ENCODE measurements at regions of chr1 and their contacts with region 1.

Region 1: GRCh38 chr1:109984456-109985275 is at the start of gene AHCYL1:
- DNase-seq: peak; percentile 100
- ATAC-seq: peak; percentile 97
- H3K4me3 ChIP-seq: peak within 1 kb of the TSS; percentile 86
- H3K27ac ChIP-seq: peak within 1 kb of the TSS; percentile 91
- H3K4me1 ChIP-seq: peaks cover 26 to 46% of the 10 kb centered on the region in 2 experiments
- H3K27me3 ChIP-seq: no peaks in the 10 kb centered on the region
- CTCF ChIP-seq: peak; percentile 96 to 99 (median 99)
- EP300 ChIP-seq: no peak; the same call in 1 of the 2 replicates
- POLR2A ChIP-seq: peak; percentile 95
- RAD21 ChIP-seq: peak; percentile 100
- polyA plus RNA-seq, gene AHCYL1: 27.3 to 32.9 TPM

Region 2: DNA sequence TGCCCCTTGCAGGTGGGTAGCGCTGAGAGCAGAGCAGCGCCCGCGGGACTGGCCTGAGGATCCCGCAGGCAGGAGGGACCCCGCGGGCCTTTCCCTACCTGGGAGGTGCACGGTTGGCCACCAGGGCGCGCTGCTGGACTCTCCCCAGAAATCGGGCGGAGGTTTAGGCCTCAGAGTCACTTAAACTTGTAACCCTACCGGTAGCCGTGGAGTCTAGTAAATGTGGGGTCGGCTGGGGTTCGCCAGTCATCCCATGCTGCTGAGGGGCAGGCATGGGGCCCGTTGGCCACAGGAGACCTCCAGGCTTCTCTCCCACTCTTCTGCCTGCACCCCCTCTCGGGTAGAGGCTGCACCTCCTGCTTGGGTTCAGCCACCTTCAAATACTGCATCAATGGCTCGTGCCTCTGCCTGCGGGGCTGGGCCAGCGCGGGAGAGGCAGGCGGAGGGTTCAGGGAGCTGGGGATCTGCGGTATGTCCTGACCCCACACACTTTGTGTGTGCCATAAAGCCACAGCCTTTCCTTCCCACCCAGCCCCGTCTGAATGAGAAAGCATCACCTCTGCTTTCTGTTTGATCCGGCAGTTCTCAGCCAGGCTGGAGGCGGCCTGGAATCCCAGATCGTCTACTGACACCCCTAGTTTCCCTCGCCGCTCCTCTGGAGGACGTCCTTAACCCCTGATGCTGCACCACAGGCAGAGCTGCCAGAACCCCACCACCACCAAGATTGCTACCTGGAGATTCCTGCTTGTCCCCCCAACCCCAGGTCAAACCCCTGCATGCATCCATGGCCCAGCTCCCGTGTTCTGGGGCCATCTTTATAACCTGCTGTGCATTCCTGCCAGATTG is 341.1 kb before region 1 on chr1:
- CTCF ChIA-PET with region 1: interaction called, 15 read pairs
- POLR2A ChIA-PET with region 1: interaction called, 5 read pairs
- in situ Hi-C with region 1: loop called (anchors 5 kb)
- intact Hi-C with region 1: loop called (anchors 2 kb)
- DNase-seq: peak; percentile 84 to 91 (median 86)
- ATAC-seq: peak; percentile 97
- H3K4me3 ChIP-seq: no peak overlapping the region
- H3K27ac ChIP-seq: no peak overlapping the region
- H3K4me1 ChIP-seq: peaks cover 26 to 46% of the 10 kb centered on the region in 2 experiments
- H3K27me3 ChIP-seq: no peaks in the 10 kb centered on the region; a peak in 1 of 5 replicates
- CTCF ChIP-seq: peak; percentile 96 to 97 (median 97)
- EP300 ChIP-seq: no peak
- POLR2A ChIP-seq: no peak
- RAD21 ChIP-seq: peak; percentile 91 to 96

Region 3: DNA sequence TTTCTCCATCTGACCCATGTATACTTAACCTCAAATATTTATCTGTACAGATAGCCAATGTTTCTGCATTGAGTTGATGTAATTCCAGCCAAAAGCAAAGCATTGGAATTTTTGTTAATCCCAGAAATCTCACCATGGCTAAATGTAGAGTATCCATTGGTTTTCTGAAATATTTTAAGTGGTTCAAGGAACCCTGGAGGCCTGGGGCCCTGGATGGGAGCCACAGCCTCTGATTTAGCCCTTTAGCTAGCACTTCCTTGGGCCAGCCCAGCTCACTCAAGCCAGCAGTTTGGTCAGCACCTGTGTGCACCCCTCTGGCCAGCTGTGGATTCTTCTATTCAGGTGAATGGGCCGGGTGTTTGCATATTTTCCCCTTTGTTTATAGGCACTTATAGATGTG is 202.2 kb before region 1 on chr1:
- CTCF ChIA-PET with region 1: interaction called, 202 read pairs
- POLR2A ChIA-PET with region 1: interaction called, 99 read pairs
- in situ Hi-C with region 1: loop called (anchors 5 kb)
- intact Hi-C with region 1: loop called (anchors 1 kb)
- DNase-seq: no peak
- ATAC-seq: no peak
- H3K4me3 ChIP-seq: no peak overlapping the region
- H3K27ac ChIP-seq: no peak overlapping the region
- H3K4me1 ChIP-seq: peaks cover 6 to 8% of the 10 kb centered on the region in 2 experiments; a peak in 4 of 5 replicates
- H3K27me3 ChIP-seq: no peaks in the 10 kb centered on the region
- CTCF ChIP-seq: no peak
- EP300 ChIP-seq: no peak
- POLR2A ChIP-seq: no peak
- RAD21 ChIP-seq: no peak

Region 4: GRCh38 chr1:109821221-109821669 is 163.4 kb before region 1 on chr1:
- CTCF ChIA-PET with region 1: no interaction called
- POLR2A ChIA-PET with region 1: interaction called, 18 read pairs
- in situ Hi-C with region 1: no loop called
- intact Hi-C with region 1: no loop called
- DNase-seq: peak in 3 of 4 experiments; percentile 39 to 40 (median 40)
- ATAC-seq: no peak
- H3K4me3 ChIP-seq: no peak overlapping the region
- H3K27ac ChIP-seq: peak overlapping the region; percentile 80; the same call in 2 of the 3 replicates
- H3K4me1 ChIP-seq: peaks cover 60 to 71% of the 10 kb centered on the region in 2 experiments
- H3K27me3 ChIP-seq: no peaks in the 10 kb centered on the region
- CTCF ChIP-seq: no peak
- EP300 ChIP-seq: no peak
- POLR2A ChIP-seq: no peak
- RAD21 ChIP-seq: no peak

Region 5: GRCh38 chr1:109917768-109918606 is 66.7 kb before region 1 on chr1:
- CTCF ChIA-PET with region 1: interaction called, 4 read pairs
- POLR2A ChIA-PET with region 1: interaction called, 10 read pairs
- in situ Hi-C with region 1: loop called (anchors 5 kb)
- intact Hi-C with region 1: loop called (anchors 2 kb)
- DNase-seq: peak; percentile 86 to 95 (median 90)
- ATAC-seq: peak; percentile 93
- H3K4me3 ChIP-seq: no peak overlapping the region
- H3K27ac ChIP-seq: peak overlapping the region; percentile 70
- H3K4me1 ChIP-seq: peaks cover 28 to 33% of the 10 kb centered on the region in 2 experiments
- H3K27me3 ChIP-seq: no peaks in the 10 kb centered on the region
- CTCF ChIP-seq: peak; percentile 74 to 88 (median 77)
- EP300 ChIP-seq: peak; percentile 97
- POLR2A ChIP-seq: no peak
- RAD21 ChIP-seq: peak; percentile 42 to 70; a peak in 3 of 4 replicates

Region 6: GRCh38 chr1:110003747-110004630 is 19.3 kb after region 1 on chr1:
- CTCF ChIA-PET with region 1: interaction called, 3 read pairs
- POLR2A ChIA-PET with region 1: interaction called, 77 read pairs
- in situ Hi-C with region 1: no loop called
- intact Hi-C with region 1: no loop called
- DNase-seq: peak; percentile 70 to 87 (median 76)
- ATAC-seq: peak; percentile 92
- H3K4me3 ChIP-seq: peak overlapping the region; percentile 8; the same call in 1 of the 2 replicates
- H3K27ac ChIP-seq: peak overlapping the region; percentile 87
- H3K4me1 ChIP-seq: peaks cover 14 to 37% of the 10 kb centered on the region in 2 experiments
- H3K27me3 ChIP-seq: no peaks in the 10 kb centered on the region
- CTCF ChIP-seq: no peak
- EP300 ChIP-seq: peak; percentile 28; the same call in 1 of the 2 replicates
- POLR2A ChIP-seq: no peak; the same call in 1 of the 2 replicates
- RAD21 ChIP-seq: peak in 1 of 2 experiments; percentile 29; a peak in 1 of 4 replicates

Region 7: DNA sequence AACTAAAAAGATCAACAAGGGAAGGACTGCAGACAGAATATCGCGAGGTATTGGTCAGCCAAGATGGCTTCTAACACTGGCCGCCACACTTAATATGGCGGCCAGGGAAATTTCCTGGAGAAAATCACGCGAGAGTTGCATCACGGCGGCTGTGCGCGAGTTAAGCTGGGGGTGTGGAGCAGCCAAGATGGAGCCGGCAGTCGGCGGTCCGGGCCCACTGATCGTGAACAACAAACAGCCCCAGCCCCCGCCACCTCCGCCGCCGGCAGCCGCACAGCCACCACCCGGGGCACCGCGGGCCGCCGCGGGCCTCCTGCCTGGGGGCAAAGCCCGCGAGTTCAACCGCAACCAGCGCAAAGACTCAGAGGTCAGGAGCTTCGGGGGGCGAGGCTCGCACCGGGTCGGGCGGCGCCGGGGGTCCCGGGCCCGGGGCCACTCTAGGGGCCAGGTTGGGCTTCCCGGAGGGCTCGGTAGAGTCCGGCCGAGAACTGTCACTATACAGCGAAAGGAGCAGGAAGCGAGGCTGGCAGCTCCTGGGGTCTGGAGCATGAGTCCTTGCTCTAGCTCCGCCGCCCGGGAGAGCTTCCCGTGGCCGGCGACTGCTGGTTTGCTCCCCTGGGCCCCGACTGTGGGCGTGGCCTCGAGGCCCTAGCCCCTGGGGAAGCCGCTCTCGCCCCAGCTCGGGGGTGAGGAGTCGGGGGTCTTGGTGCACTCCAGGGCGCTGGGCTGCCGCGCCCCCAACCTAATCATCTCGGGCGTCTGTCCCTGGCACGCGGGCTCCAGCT is 50.0 kb after region 1 on chr1 and contains the start of gene STRIP1:
- CTCF ChIA-PET with region 1: no interaction called
- POLR2A ChIA-PET with region 1: interaction called, 13 read pairs
- in situ Hi-C with region 1: no loop called
- intact Hi-C with region 1: no loop called
- DNase-seq: peak; percentile 94 to 98 (median 94)
- ATAC-seq: peak; percentile 91
- H3K4me3 ChIP-seq: peak within 1 kb of the TSS; percentile 95
- H3K27ac ChIP-seq: peak within 1 kb of the TSS; percentile 88
- H3K4me1 ChIP-seq: peaks cover 16 to 40% of the 10 kb centered on the region in 2 experiments
- H3K27me3 ChIP-seq: no peaks in the 10 kb centered on the region
- CTCF ChIP-seq: peak in 1 of 3 experiments; percentile 60; a peak in 2 of 6 replicates
- EP300 ChIP-seq: no peak; the same call in none of the 2 replicates
- POLR2A ChIP-seq: peak; percentile 90
- RAD21 ChIP-seq: no peak
- polyA plus RNA-seq, gene STRIP1: 9.9 to 10.5 TPM